GM23248 (cell line): ENCODE measurements at regions of chrX and their contacts with region 1.

Region 1: GRCh38 chrX:106481341-106481740 is 130.4 kb upstream of the RADX start:
- DNase-seq: peak; percentile 62
- H3K4me3 ChIP-seq: no peak overlapping the region
- H3K27ac ChIP-seq: no peak overlapping the region
- H3K4me1 ChIP-seq: no peaks in the 10 kb centered on the region
- H3K27me3 ChIP-seq: no peaks in the 10 kb centered on the region

Region 2: GRCh38 chrX:106611679-106612392 is 130.5 kb after region 1 on chrX and contains the start of gene RADX:
- in situ Hi-C with region 1: no loop called
- DNase-seq: peak; percentile 86
- H3K4me3 ChIP-seq: peak within 1 kb of the TSS; percentile 82
- H3K27ac ChIP-seq: no peak within 1 kb of the TSS
- H3K4me1 ChIP-seq: no peaks in the 10 kb centered on the region
- H3K27me3 ChIP-seq: no peaks in the 10 kb centered on the region
- total RNA-seq, gene RADX: 1.3 and 2.1 TPM in 2 replicates

Region 3: GRCh38 chrX:106791495-106791894 is 310.2 kb after region 1 on chrX:
- in situ Hi-C with region 1: loop called (anchors 25 kb)
- DNase-seq: peak; percentile 40
- H3K4me3 ChIP-seq: no peak overlapping the region
- H3K27ac ChIP-seq: no peak overlapping the region
- H3K4me1 ChIP-seq: no peaks in the 10 kb centered on the region
- H3K27me3 ChIP-seq: no peaks in the 10 kb centered on the region